Uterus (tissue), 4 donors: ENCODE measurements at regions of chr6 and their contacts with region 1.

Region 1: GRCh38 chr6:42726485-42727086 is 4.2 kb upstream of the PRPH2 start:
- DNase-seq: peak; percentile 67 to 90
- H3K4me3 ChIP-seq: peak overlapping the region; percentile 30 to 44
- H3K27ac ChIP-seq: peak overlapping the region; percentile 83 to 87
- H3K4me1 ChIP-seq: no peaks in the 10 kb centered on the region
- H3K27me3 ChIP-seq: no peaks in the 10 kb centered on the region
- CTCF ChIP-seq: peak; percentile 92 to 95 (median 94)
- POLR2A ChIP-seq: no peak

Region 2: DNA sequence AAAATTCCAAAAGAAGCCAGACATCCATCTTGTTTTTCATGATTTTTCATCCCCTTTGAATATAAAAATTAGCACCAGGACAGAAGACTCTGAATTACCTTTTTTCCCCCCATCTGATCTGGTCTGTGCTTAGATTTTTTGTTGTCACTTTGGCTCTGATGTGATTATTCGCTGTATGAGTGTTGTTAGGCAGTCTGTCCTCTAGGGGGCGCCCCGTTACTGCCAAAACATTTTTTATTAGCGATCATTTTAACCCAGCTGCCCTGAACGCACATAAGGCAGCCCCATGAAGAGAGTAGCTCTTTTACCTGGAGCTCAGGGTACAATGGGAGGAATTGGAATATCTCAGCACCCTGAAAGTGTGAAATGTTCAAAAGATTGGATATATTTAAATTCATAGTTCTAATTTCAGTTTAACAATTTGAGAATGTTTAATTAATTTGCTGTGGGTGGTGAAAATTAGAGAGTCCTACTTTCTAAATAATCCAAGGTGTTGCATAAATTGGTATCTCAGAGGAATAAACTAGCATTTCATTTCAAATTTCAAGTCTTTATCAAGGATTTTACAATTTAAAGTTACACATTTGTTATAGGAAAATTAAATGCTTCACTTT is 64.9 kb before region 1 on chr6:
- intact Hi-C with region 1: loop called (anchors 2 kb)
- DNase-seq: peak; percentile 80 to 83
- H3K4me3 ChIP-seq: no peak overlapping the region
- H3K27ac ChIP-seq: peak overlapping the region in 1 of 2 donors; percentile 52
- H3K4me1 ChIP-seq: no peaks in the 10 kb centered on the region
- H3K27me3 ChIP-seq: no peaks in the 10 kb centered on the region
- CTCF ChIP-seq: peak; percentile 84 to 94 (median 90)
- POLR2A ChIP-seq: no peak